Heart right ventricle (tissue), 16 donors: ENCODE measurements at regions of chr9 and their contacts with region 1.

Region 1: GRCh38 chr9:123544007-123544827 is 188.2 kb downstream of the CRB2 start:
- DNase-seq: no peak
- ATAC-seq: no peak
- H3K4me3 ChIP-seq: no peak overlapping the region
- H3K27ac ChIP-seq: no peak overlapping the region
- H3K4me1 ChIP-seq: peaks cover 0 to 10% (median 4%) of the 10 kb centered on the region in 9 donors
- H3K27me3 ChIP-seq: no peaks in the 10 kb centered on the region
- CTCF ChIP-seq: peak; percentile 58 to 92 (median 80)

Region 2: DNA sequence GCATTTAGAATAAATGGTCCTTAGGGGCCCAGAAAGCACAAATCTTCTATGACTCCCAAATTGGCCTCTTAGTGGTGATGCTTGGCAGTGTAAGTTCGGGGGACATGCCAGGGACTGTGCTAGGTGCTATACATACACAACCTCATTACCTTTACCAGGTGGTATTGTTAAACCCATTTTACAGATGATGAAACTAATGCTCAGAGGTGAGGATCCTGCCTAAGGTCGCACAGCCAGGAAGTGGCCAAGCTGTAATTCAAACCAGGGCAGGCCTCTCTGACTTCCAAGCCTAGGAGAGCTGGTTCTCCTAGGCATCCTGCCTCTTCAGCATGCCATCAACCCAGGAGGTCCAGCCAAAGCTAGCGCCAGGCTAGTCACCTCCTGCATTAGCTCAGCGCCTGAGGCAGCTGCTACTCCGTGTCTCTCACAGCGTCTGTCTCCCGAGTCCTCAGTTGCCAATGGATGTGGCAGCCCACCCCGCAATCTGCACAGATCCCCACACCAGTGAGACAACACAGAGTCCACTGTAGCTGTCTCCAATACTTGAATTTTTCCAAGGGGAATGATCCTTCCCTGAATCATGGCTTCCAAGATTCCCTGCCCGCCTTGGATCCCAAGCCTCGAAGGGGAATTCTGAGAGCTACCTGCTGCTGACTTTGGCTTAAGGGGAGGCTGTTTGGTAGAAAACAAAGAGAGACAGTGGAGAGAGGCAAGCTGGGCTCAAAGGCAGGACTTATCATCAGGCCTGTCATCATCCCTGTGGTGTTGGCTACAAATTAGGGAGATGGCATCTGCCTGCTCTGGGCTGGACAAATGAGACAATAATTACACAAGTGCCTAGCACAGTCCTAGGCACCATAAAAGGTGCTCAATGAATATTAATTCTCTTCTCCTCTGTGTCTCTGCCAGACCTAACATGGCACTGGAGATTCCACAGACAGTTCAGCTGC is 135.6 kb before region 1 on chr9:
- intact Hi-C with region 1: loop called in 1 of 10 experiments (anchors 2 kb)
- DNase-seq: no peak
- ATAC-seq: peak in 3 of 8 donors; percentile 45 to 77 (median 51)
- H3K4me3 ChIP-seq: no peak overlapping the region
- H3K27ac ChIP-seq: no peak overlapping the region
- H3K4me1 ChIP-seq: peaks cover 0 to 6% (median 0%) of the 10 kb centered on the region in 9 donors
- H3K27me3 ChIP-seq: no peaks in the 10 kb centered on the region
- CTCF ChIP-seq: no peak

Region 3: GRCh38 chr9:123784518-123784917 is 240.3 kb after region 1 on chr9:
- intact Hi-C with region 1: no loop called
- DNase-seq: no peak
- ATAC-seq: no peak
- H3K4me3 ChIP-seq: no peak overlapping the region
- H3K27ac ChIP-seq: no peak overlapping the region
- H3K4me1 ChIP-seq: peaks cover 0 to 6% (median 0%) of the 10 kb centered on the region in 9 donors
- H3K27me3 ChIP-seq: no peaks in the 10 kb centered on the region
- CTCF ChIP-seq: no peak

Region 4: DNA sequence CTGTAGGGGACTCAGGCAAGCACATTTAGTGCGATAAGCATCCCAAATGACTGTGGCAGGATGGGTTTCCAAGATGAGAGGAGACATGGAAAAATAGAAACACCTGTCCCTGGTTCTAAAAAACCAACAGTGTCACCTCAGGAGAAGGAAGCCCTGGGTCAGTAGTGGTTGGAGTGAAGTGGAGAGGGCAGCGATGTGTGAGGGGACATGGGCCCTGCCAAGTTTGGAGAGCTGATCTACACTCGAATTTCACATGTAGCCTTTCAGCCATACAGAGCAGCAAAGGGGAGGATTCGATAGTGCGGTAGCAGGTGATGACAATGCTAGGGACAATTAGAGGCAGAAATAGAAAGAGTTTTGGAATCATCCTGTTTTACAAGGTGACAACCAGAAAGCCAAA is 434.8 kb after region 1 on chr9:
- intact Hi-C with region 1: no loop called
- DNase-seq: no peak
- ATAC-seq: no peak
- H3K4me3 ChIP-seq: no peak overlapping the region
- H3K27ac ChIP-seq: no peak overlapping the region
- H3K4me1 ChIP-seq: no peaks in the 10 kb centered on the region
- H3K27me3 ChIP-seq: peaks cover 0 to 40% (median 31%) of the 10 kb centered on the region in 7 donors
- CTCF ChIP-seq: no peak

Region 5: GRCh38 chr9:124964604-124965003 is 1420.4 kb after region 1 on chr9:
- intact Hi-C with region 1: no loop called
- DNase-seq: no peak
- ATAC-seq: no peak
- H3K4me3 ChIP-seq: no peak overlapping the region
- H3K27ac ChIP-seq: peak overlapping the region in 1 of 10 donors; percentile 59
- H3K4me1 ChIP-seq: peaks cover 0 to 20% (median 0%) of the 10 kb centered on the region in 9 donors
- H3K27me3 ChIP-seq: no peaks in the 10 kb centered on the region
- CTCF ChIP-seq: no peak